ENCODE measurements at regions of chr10 and their contacts with region 1.

Region 1: DNA sequence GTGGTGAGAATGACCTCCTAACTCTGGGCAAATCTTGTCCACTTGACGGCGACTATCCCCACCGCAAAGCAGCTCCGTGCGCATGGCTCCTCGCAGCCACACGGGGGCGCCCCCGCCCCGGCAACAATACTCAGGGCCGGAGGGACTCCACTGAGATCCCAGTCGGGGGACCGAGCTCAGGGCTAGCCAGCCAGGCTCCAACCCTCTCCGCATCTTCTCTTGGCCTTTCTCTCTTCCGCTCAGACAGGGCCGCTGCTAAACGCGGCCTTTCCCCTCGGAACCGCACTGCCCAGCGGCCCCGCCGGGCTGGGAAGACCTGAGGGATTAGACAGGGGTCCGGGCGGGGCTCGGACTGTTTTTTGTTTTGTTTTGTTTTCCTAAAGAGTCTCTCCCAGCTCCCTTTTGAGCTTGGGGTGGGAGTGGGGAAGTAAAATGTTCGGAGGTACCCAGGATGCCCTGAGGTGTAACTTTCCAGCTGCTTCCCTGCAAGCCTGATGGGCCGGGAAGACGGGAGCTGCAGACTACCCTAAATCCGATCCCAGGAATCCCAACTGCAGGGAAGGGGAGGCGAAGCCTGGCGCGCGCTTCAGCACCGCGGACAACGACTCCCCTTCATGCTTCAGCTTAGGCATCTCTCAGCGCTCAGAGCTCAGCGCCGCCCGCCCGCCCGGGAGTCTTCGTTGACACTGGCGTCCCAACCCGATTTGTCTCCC is 2.7 kb downstream of the KCNIP2 start:
- DNase-seq: peak; percentile 80
- H3K4me3 Mint-ChIP-seq: peak overlapping the region; percentile 78
- H3K27ac Mint-ChIP-seq: no peak overlapping the region
- H3K4me1 Mint-ChIP-seq: peaks cover 47% of the 10 kb centered on the region
- H3K27me3 Mint-ChIP-seq: peaks cover 57% of the 10 kb centered on the region

Region 2: GRCh38 chr10:101818119-101818871 is 22.6 kb before region 1 on chr10 and contains the start of gene OGA:
- CTCF ChIA-PET with region 1: interaction called, 19 read pairs
- DNase-seq: peak; percentile 99
- H3K4me3 Mint-ChIP-seq: peak within 1 kb of the TSS; percentile 89
- H3K27ac Mint-ChIP-seq: peak within 1 kb of the TSS; percentile 96
- H3K4me1 Mint-ChIP-seq: peaks cover 39% of the 10 kb centered on the region
- H3K27me3 Mint-ChIP-seq: peaks cover 4% of the 10 kb centered on the region

Region 3: GRCh38 chr10:101851411-101852116 is 10.7 kb after region 1 on chr10:
- CTCF ChIA-PET with region 1: interaction called, 17 read pairs
- DNase-seq: no peak
- H3K4me3 Mint-ChIP-seq: no peak overlapping the region
- H3K27ac Mint-ChIP-seq: no peak overlapping the region
- H3K4me1 Mint-ChIP-seq: no peaks in the 10 kb centered on the region
- H3K27me3 Mint-ChIP-seq: no peaks in the 10 kb centered on the region

Region 4: GRCh38 chr10:101879456-101880231 is 38.7 kb after region 1 on chr10:
- CTCF ChIA-PET with region 1: interaction called, 14 read pairs
- DNase-seq: no peak
- H3K4me3 Mint-ChIP-seq: no peak overlapping the region
- H3K27ac Mint-ChIP-seq: no peak overlapping the region
- H3K4me1 Mint-ChIP-seq: peaks cover 15% of the 10 kb centered on the region
- H3K27me3 Mint-ChIP-seq: no peaks in the 10 kb centered on the region

Region 5: GRCh38 chr10:102009801-102010425 is 169.0 kb after region 1 on chr10:
- CTCF ChIA-PET with region 1: interaction called, 95 read pairs
- DNase-seq: peak; percentile 53
- H3K4me3 Mint-ChIP-seq: no peak overlapping the region
- H3K27ac Mint-ChIP-seq: no peak overlapping the region
- H3K4me1 Mint-ChIP-seq: no peaks in the 10 kb centered on the region
- H3K27me3 Mint-ChIP-seq: no peaks in the 10 kb centered on the region